Dorsolateral prefrontal cortex (tissue), 120 donors: ENCODE measurements at regions of chr9 and their contacts with region 1.

Region 1: GRCh38 chr9:96619491-96620154 is at the start of gene CDC14B:
- DNase-seq: peak; percentile 56 to 96 (median 93)
- H3K4me3 ChIP-seq: peak within 1 kb of the TSS; percentile 56 to 93 (median 84)
- H3K27ac ChIP-seq: peak within 1 kb of the TSS; percentile 77 to 99 (median 95)
- H3K27me3 ChIP-seq: no peaks in the 10 kb centered on the region
- CTCF ChIP-seq: peak in 18 of 56 donors; percentile 0 to 47 (median 16)
- total RNA-seq, gene CDC14B: 28.9 to 134 (median 53.2) TPM

Region 2: GRCh38 chr9:96555567-96556386 is 63.8 kb before region 1 on chr9:
- intact Hi-C with region 1: loop called in 1 of 2 experiments (anchors 5 kb)
- DNase-seq: no peak
- H3K4me3 ChIP-seq: peak overlapping the region in 16 of 59 donors; percentile 0 to 41 (median 11)
- H3K27ac ChIP-seq: peak overlapping the region in 58 of 59 donors; percentile 4 to 95 (median 88)
- H3K27me3 ChIP-seq: no peaks in the 10 kb centered on the region
- CTCF ChIP-seq: no peak

Region 3: DNA sequence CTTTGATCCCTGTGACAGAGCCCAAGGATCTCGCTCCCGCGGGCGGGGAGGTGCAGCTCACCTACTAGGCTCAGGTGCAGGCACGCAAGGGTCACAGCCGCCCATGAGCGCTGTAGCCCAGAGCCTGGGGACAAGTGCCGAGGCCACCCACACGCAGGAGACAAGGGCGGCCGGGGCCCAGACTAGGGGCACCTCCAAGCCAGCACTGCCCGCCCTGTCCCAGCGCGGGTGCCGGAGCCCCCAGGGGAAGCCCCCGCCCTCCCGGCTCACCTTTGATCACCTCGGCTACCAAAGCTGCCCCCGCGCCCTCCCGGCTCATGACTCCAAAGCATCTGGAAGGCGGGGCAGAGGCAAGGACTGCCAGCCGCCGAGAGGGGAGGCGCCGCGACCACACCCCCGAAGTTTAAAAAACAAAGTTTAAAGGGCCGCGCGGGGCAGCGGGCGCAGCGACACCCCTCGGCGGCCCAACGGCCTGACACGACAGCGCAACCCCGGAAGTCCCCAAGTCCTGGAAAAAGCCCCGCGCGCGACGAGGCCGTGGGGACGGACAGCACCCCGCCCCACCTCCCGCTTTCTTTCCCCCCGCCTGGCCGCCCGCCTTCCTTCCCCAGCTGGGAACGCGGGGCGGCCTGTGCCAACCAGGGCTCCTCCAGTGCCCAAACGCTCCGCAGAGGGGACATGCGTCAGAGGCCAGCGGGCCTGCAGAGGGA is 53.0 kb before region 1 on chr9:
- intact Hi-C with region 1: loop called in 1 of 2 experiments (anchors 2 kb)
- DNase-seq: peak; percentile 38 to 86 (median 76)
- H3K4me3 ChIP-seq: peak overlapping the region; percentile 53 to 92 (median 78)
- H3K27ac ChIP-seq: peak overlapping the region; percentile 73 to 99 (median 97)
- H3K27me3 ChIP-seq: no peaks in the 10 kb centered on the region
- CTCF ChIP-seq: peak; percentile 40 to 87 (median 72)

Region 4: GRCh38 chr9:96654443-96655197 is 35.0 kb after region 1 on chr9:
- intact Hi-C with region 1: loop called (anchors 5 kb)
- DNase-seq: peak; percentile 46 to 85 (median 73)
- H3K4me3 ChIP-seq: peak overlapping the region; percentile 45 to 81 (median 70)
- H3K27ac ChIP-seq: peak overlapping the region; percentile 71 to 98 (median 93)
- H3K27me3 ChIP-seq: no peaks in the 10 kb centered on the region
- CTCF ChIP-seq: peak in 24 of 56 donors; percentile 8 to 52 (median 22)

Region 5: DNA sequence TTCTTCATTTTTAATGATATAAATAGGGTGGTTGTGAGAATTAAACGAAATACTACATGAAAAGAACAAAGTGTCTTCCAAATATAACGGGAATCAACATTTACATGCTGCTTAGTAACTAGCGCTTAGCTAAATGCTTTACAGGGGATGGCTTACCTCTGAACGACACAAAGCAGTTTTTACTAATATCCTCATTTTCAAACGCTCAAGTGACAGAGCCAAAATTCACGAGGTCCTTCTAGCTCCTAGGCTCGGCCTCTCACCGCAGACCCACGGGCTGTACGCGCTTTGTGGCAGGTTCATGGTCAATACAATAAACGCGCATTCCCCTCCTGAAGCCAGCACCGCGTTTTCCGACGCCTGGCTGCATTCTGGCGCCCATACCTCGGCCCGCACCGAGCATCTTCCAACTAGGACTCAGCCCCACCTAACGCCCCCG is 157.8 kb after region 1 on chr9:
- intact Hi-C with region 1: no loop called
- DNase-seq: peak in 1 of 10 donors; percentile 38
- H3K4me3 ChIP-seq: peak overlapping the region; percentile 68 to 100 (median 92)
- H3K27ac ChIP-seq: peak overlapping the region in 57 of 59 donors; percentile 6 to 93 (median 87)
- H3K27me3 ChIP-seq: no peaks in the 10 kb centered on the region
- CTCF ChIP-seq: no peak